BJ (cell line): ENCODE measurements at regions of chr17 and their contacts with region 1.

Region 1: GRCh38 chr17:71472809-71473789 is 647.7 kb upstream of the SOX9 start:
- DNase-seq: no peak
- H3K4me3 ChIP-seq: no peak overlapping the region
- H3K27me3 ChIP-seq: no peaks in the 10 kb centered on the region
- CTCF ChIP-seq: peak; percentile 85

Region 2: DNA sequence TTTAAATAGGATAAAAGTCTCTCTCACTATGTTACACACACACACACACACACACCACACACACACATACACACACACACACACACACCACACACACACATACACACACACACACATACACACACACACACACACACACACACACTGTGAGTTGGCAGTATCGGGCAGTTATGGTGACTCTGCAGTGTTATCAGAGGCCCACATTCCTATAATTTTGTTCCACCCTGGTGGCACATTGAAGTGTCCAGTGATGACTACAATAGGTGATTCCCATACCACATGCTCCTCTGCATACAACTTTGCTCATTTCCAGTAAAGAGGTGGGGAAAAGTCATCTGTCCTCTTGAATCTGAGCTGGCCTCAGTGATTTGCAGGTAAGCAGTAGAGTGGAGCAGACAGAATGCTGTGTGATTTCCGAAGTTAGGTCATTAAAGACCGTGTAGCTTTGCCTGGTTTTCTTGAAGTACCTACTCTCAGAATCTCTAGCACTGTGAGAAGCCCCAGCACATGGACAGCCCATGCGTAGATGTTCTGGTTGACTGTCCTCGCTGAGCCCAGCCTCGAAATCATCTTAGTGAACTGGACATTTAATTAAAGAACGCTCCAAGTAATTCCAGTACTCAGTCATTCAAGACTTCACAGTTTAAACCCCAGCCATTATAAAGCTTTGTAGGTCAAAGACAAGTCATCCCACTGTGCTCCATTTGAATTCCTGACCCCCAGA is 188.9 kb before region 1 on chr17:
- CTCF ChIA-PET with region 1: no interaction called
- POLR2A ChIA-PET with region 1: interaction called, 11 read pairs
- DNase-seq: no peak
- H3K4me3 ChIP-seq: no peak overlapping the region
- H3K27me3 ChIP-seq: no peaks in the 10 kb centered on the region
- CTCF ChIP-seq: no peak

Region 3: DNA sequence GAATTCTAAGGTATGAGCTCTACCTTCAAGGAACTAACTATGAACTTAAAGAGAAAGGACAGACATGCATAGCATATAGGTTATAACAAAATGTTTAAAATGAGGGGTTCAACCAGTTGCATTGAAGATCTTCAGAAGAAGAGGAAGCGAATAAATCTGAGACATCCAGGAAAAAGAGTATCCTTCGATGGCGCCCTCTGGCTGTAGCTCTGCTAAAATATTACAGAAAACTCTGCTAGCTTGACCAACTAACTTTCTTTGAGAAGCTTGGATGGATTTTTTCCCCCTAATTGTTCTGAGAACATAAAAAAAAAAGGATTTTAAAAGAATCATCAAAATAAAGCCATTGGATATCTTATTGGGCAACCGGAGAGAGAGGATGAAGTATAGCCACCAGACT is 12.2 kb before region 1 on chr17:
- CTCF ChIA-PET with region 1: interaction called, 31 read pairs
- POLR2A ChIA-PET with region 1: no interaction called
- DNase-seq: no peak
- H3K4me3 ChIP-seq: no peak overlapping the region
- H3K27me3 ChIP-seq: no peaks in the 10 kb centered on the region
- CTCF ChIP-seq: peak; percentile 57

Region 4: GRCh38 chr17:71484546-71484945 is 11.4 kb after region 1 on chr17:
- CTCF ChIA-PET with region 1: interaction called, 15 read pairs
- POLR2A ChIA-PET with region 1: no interaction called
- DNase-seq: no peak
- H3K4me3 ChIP-seq: no peak overlapping the region
- H3K27me3 ChIP-seq: no peaks in the 10 kb centered on the region
- CTCF ChIP-seq: no peak

Region 5: GRCh38 chr17:71580220-71580619 is 107.1 kb after region 1 on chr17:
- CTCF ChIA-PET with region 1: no interaction called
- POLR2A ChIA-PET with region 1: no interaction called
- DNase-seq: no peak
- H3K4me3 ChIP-seq: no peak overlapping the region
- H3K27me3 ChIP-seq: no peaks in the 10 kb centered on the region
- CTCF ChIP-seq: no peak

Region 6: GRCh38 chr17:72120642-72121163 is 647.6 kb after region 1 on chr17 and contains the start of gene SOX9:
- CTCF ChIA-PET with region 1: interaction called, 20 read pairs
- POLR2A ChIA-PET with region 1: no interaction called
- DNase-seq: peak; percentile 53
- H3K4me3 ChIP-seq: peak within 1 kb of the TSS; percentile 71
- H3K27me3 ChIP-seq: peaks cover 32% of the 10 kb centered on the region
- CTCF ChIP-seq: no peak
- polyA plus RNA-seq, gene SOX9: 0.54 and 0.60 TPM in 2 replicates